KBM-7 (cell line): ENCODE measurements at regions of chr10 and their contacts with region 1.

Region 1: GRCh38 chr10:114103284-114103683 is 59.6 kb downstream of the ADRB1 start:
- DNase-seq: peak; percentile 71

Region 2: DNA sequence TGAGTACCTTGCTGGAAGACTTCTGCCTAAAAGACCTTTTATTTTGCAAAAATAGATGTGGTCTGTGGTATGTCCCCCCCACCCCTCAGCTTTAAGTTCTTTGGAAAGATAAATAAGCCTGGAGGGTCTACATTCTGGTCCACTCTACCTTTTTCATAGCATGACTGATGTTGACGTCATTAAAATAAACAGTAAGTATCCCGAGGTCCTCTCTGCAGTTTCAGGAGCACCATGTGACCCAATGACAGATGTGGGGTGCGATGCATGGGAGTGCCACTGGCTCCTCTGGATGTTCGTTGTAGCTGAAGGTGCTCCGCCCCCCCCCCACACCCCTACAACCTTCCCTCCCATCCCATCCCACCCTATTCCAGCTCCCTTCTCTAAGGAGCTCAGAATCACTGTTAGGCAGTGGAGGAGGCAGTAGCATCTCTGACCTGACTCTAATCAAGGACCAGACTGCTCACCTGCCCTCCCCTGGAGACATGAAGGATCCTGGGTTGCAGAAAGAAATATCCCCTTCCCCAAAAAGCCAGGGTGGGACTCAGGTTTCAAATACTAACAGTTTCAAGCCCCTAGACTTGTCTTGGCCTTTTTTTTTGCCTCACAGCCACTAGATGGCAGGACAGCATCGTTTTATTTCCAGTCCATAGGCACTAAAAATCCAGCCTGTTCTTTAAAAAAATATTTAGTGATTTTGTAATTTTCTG is 398.5 kb before region 1 on chr10:
- in situ Hi-C with region 1: loop called (anchors 25 kb)
- DNase-seq: peak; percentile 38